ENCODE measurements at regions of chr21 and their contacts with region 1.

Region 1: GRCh38 chr21:41612674-41613532 is 104.9 kb upstream of the TMPRSS2 start:
- DNase-seq: peak; percentile 97
- H3K4me3 ChIP-seq: no peak overlapping the region
- CTCF ChIP-seq: peak; percentile 76

Region 2: DNA sequence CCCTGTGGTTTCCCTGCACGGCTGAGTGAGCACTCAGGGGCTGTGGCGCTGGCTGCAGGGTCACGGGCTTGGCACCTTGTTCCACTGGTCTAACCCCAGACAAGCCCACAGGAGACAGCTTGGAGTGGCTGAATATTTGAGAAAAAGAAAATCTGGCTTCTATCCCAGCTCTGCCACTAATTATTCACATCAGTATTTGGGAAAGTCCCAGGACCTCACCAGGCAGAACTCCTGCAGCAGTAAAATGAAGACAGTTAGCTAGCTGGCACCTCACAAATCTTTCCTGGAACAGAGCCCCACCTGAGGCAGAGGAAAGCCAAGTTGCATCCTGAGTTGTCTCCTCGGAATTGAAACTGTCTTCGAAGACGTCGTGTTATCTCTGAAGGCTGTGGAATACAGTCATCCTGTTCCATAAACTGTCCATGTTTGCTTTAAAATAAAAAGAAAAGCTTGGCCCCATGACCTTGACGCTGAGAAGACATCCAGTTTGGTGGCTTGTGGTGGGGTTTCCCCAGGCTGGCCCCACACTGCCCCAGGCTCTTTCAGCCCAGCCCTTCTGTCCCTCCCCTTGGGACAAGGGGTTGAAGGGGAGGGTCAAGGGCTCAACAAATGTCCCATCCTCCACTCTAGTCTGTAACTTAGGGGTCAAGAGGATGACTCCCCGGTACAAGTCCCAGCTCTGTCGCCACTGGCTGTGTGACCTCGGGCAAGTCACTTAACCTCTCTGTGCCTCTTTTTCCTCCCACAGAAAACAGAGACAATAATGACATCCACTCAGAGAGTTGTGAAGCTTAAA is 11.1 kb before region 1 on chr21:
- CTCF ChIA-PET with region 1: interaction called, 32 read pairs
- POLR2A ChIA-PET with region 1: no interaction called
- DNase-seq: no peak
- H3K4me3 ChIP-seq: no peak overlapping the region
- CTCF ChIP-seq: no peak

Region 3: GRCh38 chr21:41622831-41623548 is 10.1 kb after region 1 on chr21:
- CTCF ChIA-PET with region 1: interaction called, 12 read pairs
- POLR2A ChIA-PET with region 1: interaction called, 6 read pairs
- DNase-seq: no peak
- H3K4me3 ChIP-seq: no peak overlapping the region
- CTCF ChIP-seq: no peak

Region 4: DNA sequence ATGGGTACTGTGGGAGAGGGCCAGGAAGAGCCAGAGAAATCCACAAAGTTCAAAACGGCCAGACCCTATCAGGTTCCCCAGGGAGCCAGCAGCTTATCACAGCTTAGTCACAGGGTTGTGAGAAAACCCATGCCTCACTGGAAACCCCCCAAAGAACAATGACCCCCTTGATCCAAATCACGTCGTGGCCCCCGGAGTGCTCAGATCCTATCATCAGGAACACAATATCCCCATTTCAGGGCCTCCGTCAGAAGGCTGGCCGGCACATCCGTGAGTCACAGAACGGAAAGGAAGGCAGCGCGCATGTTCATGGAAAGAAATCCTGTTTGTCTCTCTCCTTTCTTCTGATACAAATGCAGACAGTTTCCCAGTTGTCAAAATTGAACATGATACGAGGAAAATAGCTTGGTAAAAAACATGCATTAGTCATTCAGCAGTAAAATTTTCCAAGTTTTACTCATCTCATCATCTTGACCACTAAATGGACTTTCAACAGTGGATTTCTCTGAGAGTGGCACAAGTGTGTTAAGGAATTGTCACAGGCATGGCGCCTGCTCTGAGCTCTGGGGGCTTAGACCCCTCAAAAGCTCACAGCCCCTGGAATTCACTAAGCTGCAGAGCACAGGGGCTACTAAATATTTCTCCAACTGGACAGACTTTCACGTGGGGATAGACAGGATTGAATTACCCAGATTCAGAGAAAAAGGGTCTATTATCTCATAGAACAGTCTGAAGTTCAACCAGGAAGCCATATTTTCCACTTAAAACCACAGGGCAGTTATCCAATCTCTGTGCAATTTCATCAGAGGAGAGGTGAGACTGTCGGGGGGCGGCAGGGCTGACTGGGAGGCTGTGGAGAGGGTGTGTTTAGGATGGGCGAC is 29.2 kb after region 1 on chr21:
- CTCF ChIA-PET with region 1: interaction called, 12 read pairs
- POLR2A ChIA-PET with region 1: interaction called, 3 read pairs
- DNase-seq: peak; percentile 74
- H3K4me3 ChIP-seq: peak overlapping the region; percentile 15; the same call in 1 of the 2 replicates
- CTCF ChIP-seq: no peak

Region 5: DNA sequence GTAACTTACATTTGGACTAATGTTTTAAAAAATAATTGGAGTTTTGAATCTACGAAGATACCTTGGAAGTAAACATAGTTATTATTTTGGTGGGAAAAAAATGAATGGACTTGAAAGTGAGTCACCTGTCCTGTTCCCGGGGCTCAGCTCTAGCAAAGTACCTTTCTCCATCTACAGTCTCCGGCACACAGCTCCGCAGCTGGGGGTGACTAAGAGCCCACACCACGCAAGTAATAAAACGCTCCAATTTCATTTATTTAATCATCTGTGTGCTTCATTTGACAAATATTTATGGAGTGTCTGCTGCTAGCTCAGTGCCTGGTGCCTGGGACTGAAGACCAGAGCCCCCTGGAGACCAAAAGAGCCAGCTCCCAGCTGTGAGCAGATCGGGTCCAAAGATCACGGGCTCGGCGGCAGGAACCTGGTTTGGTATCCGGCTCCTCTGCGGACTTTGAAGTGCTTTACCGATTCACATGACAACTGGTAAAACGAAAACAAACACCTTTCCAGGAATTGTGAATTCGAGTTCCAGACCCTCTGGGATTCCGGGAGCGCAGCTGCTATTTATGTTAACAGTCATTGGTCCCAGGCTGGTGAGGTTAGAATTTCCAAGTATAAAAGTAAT is 155.6 kb after region 1 on chr21:
- CTCF ChIA-PET with region 1: interaction called, 188 read pairs
- POLR2A ChIA-PET with region 1: interaction called, 5 read pairs
- DNase-seq: peak; percentile 24
- H3K4me3 ChIP-seq: peak overlapping the region; percentile 48
- CTCF ChIP-seq: peak; percentile 58

Region 6: GRCh38 chr21:41777951-41778874 is 165.3 kb after region 1 on chr21:
- CTCF ChIA-PET with region 1: interaction called, 188 read pairs
- POLR2A ChIA-PET with region 1: interaction called, 3 read pairs
- DNase-seq: peak; percentile 10
- H3K4me3 ChIP-seq: no peak overlapping the region
- CTCF ChIP-seq: peak; percentile 88

Region 7: DNA sequence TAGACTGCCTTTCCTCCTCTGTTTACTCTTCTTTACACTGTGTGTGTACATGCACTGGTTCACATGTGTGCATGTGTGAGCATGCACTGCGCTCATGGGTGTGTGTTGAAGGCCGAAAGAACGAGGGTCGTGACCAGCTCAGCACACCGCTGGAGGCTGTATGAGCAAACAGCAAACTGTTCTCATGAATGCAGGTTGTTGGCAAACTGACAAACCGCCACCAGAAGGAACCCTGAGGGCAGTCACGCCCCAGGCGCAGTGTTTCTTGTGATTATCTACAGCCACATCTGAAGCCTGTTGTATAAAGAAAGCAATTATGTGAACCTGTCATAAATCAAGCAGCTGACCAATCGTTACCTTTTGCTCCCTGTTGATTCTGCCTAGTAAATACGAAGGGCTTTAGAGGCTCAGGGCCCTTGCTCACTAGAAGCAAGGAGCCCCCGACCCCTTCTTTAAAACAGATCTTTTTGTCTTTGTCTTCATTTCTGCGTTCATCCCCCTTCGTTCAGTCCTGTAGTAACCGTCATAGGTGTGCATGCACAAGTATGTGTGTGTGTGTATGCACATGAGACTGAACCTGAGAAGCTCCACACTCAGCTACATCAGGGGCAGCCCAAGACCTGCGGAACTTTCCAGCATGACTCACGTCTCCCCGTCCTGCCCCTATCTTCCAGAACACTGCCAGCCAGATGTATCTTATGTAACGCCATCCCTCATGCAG is 170.7 kb after region 1 on chr21:
- CTCF ChIA-PET with region 1: interaction called, 188 read pairs
- POLR2A ChIA-PET with region 1: interaction called, 3 read pairs
- DNase-seq: no peak
- H3K4me3 ChIP-seq: no peak overlapping the region
- CTCF ChIP-seq: no peak

Measured in AG04449 (cell line).